ENCODE measurements at regions of chr13 and their contacts with region 1.

Region 1: DNA sequence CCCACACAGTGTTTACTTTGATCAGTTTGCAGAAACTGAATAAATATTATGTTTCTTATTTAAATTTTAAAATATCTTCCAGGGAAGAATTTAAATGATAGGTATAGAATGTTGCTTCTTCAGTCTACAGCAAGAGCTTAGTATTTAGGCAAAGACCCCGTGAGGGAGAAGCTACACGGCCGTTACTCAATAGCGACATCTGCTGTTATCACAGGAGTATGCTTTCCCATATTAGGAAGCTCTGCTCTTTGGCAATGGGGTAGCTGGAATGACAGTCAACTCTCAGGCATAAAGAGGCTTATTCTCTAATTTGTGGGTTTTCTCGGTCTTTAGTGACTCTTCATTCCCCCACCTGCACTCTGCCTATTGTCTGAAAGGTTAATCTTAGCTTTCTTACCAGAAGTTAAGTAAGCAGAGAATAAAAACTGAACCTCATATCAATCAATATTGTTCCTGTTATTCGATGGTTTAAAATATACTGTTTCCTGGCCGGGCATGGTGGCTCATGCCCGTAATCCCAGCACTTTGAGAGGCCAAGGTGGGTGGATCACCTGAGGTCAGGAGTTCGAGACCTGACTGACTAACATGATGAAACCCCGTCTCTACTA is 13.2 kb upstream of the LHFPL6 start:
- DNase-seq: peak; percentile 64
- H3K4me3 ChIP-seq: no peak overlapping the region; a peak in 1 of 4 replicates
- H3K27ac ChIP-seq: no peak overlapping the region
- H3K4me1 ChIP-seq: peaks cover 0 to 6% of the 10 kb centered on the region in 2 experiments; a peak in 1 of 4 replicates
- H3K27me3 ChIP-seq: no peaks in the 10 kb centered on the region
- CTCF ChIP-seq: peak; percentile 90
- EP300 ChIP-seq: no peak
- RAD21 ChIP-seq: peak; percentile 87

Region 2: GRCh38 chr13:38970380-38971051 is 645.7 kb before region 1 on chr13:
- CTCF ChIA-PET with region 1: interaction called, 15 read pairs
- POLR2A ChIA-PET with region 1: no interaction called
- DNase-seq: peak; percentile 3
- H3K4me3 ChIP-seq: no peak overlapping the region
- H3K27ac ChIP-seq: no peak overlapping the region
- H3K4me1 ChIP-seq: no peaks in the 10 kb centered on the region
- H3K27me3 ChIP-seq: no peaks in the 10 kb centered on the region
- CTCF ChIP-seq: no peak
- EP300 ChIP-seq: no peak
- RAD21 ChIP-seq: peak; percentile 60

Region 3: GRCh38 chr13:39154041-39154440 is 462.1 kb before region 1 on chr13:
- CTCF ChIA-PET with region 1: interaction called, 12 read pairs
- POLR2A ChIA-PET with region 1: no interaction called
- DNase-seq: no peak
- H3K4me3 ChIP-seq: no peak overlapping the region
- H3K27ac ChIP-seq: no peak overlapping the region
- H3K4me1 ChIP-seq: no peaks in the 10 kb centered on the region
- H3K27me3 ChIP-seq: no peaks in the 10 kb centered on the region; the same call in 1 of the 2 replicates
- CTCF ChIP-seq: no peak
- EP300 ChIP-seq: no peak
- RAD21 ChIP-seq: no peak

Region 4: DNA sequence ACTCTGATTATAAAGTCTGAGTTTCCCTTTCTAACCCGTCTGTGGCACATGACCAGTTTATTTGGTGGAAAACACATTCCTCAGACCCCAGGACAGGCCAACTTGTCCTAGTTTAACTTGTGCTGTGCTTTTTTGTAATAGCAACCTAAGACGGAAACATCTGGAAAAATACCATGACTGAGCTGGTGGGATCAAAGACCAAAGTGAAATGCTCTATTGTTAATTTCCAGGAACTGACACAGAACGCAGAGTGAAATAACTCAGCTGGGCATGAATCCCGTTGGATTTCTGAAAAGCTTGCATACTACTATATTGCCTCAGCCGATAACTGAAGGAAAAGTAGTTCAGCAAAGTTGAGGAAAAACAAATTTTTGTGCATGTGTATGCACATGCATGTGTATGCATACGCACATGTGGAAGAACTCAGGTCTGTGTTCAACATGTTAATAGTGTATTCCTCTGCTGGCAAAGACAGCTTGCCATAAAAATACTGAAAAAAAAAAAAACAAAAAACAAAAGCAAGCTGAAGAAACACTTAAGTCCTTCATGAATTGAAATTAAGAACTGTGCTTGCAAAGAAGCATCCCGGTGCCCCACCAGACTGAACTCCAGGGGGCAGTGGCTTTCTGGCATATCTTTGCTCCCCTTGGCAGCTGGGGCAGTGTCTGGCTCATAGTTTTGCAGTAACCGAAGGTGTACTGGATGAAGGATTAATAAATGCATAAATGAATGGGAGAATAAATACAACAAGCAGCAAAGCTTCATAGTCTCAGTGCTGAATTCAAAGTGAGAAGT is 201.0 kb before region 1 on chr13:
- CTCF ChIA-PET with region 1: interaction called, 48 read pairs
- POLR2A ChIA-PET with region 1: no interaction called
- DNase-seq: peak; percentile 30
- H3K4me3 ChIP-seq: no peak overlapping the region
- H3K27ac ChIP-seq: no peak overlapping the region
- H3K4me1 ChIP-seq: peaks cover 0 to 3% of the 10 kb centered on the region in 2 experiments; a peak in 2 of 4 replicates
- H3K27me3 ChIP-seq: no peaks in the 10 kb centered on the region
- CTCF ChIP-seq: peak; percentile 67
- EP300 ChIP-seq: no peak
- RAD21 ChIP-seq: peak; percentile 73

Region 5: GRCh38 chr13:39586151-39586550 is 30.0 kb before region 1 on chr13:
- CTCF ChIA-PET with region 1: interaction called, 12 read pairs
- POLR2A ChIA-PET with region 1: no interaction called
- DNase-seq: no peak
- H3K4me3 ChIP-seq: no peak overlapping the region
- H3K27ac ChIP-seq: no peak overlapping the region
- H3K4me1 ChIP-seq: no peaks in the 10 kb centered on the region
- H3K27me3 ChIP-seq: no peaks in the 10 kb centered on the region
- CTCF ChIP-seq: no peak
- EP300 ChIP-seq: no peak
- RAD21 ChIP-seq: no peak

Region 6: DNA sequence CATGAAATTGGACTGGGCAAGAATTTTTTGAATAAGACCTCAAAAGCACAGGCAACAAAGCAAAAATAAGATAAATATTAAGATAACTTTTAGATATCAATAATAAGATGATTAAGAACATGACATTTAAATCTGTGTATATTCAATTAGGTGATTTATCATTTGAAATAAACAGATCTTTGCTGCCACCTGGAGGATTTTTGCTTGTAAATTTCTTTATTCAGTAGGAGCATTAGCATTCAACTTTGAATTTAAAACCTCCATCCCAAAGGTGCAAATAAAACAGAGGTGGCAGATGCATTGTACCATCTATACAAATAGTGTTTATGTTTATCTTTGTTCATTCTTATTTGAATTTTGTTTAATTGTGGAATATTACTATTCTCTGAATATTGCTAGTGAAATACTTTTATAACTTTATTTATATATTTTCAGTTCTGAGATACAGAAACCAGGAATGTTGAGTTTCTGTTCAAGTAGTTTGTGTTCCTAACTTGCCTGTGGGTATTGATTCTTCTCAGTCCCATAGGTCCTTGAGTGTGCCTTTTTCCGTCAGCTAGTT is 60.2 kb after region 1 on chr13:
- CTCF ChIA-PET with region 1: interaction called, 11 read pairs
- POLR2A ChIA-PET with region 1: no interaction called
- DNase-seq: peak; percentile 19
- H3K4me3 ChIP-seq: no peak overlapping the region
- H3K27ac ChIP-seq: no peak overlapping the region
- H3K4me1 ChIP-seq: no peaks in the 10 kb centered on the region; a peak in 1 of 4 replicates
- H3K27me3 ChIP-seq: no peaks in the 10 kb centered on the region
- CTCF ChIP-seq: peak; percentile 66
- EP300 ChIP-seq: no peak
- RAD21 ChIP-seq: peak; percentile 64

Region 7: DNA sequence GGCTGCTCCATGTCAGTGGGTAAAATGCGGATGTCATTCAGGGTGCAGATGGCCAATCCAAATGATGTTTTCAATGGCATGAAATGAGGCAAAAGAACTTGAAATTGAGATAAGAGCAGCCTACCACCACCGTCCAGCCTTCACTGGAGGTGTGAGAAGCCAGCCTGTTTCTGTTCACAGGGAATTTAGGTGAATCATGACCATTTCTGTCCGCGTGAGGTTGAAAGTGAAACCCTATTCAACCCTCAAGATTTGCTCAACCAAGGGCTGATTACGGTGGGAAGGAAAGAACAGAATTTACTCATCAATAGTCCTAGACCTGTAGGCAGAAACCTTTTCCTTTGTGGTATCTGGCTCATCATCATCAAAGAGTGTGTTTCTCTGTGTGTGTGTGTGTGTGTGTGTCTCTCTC is 410.0 kb after region 1 on chr13:
- CTCF ChIA-PET with region 1: no interaction called
- POLR2A ChIA-PET with region 1: no interaction called
- DNase-seq: no peak
- H3K4me3 ChIP-seq: no peak overlapping the region
- H3K27ac ChIP-seq: no peak overlapping the region
- H3K4me1 ChIP-seq: peaks cover 11 to 16% of the 10 kb centered on the region in 2 experiments; a peak in 2 of 4 replicates
- H3K27me3 ChIP-seq: no peaks in the 10 kb centered on the region
- CTCF ChIP-seq: no peak
- EP300 ChIP-seq: no peak
- RAD21 ChIP-seq: no peak

Region 8: DNA sequence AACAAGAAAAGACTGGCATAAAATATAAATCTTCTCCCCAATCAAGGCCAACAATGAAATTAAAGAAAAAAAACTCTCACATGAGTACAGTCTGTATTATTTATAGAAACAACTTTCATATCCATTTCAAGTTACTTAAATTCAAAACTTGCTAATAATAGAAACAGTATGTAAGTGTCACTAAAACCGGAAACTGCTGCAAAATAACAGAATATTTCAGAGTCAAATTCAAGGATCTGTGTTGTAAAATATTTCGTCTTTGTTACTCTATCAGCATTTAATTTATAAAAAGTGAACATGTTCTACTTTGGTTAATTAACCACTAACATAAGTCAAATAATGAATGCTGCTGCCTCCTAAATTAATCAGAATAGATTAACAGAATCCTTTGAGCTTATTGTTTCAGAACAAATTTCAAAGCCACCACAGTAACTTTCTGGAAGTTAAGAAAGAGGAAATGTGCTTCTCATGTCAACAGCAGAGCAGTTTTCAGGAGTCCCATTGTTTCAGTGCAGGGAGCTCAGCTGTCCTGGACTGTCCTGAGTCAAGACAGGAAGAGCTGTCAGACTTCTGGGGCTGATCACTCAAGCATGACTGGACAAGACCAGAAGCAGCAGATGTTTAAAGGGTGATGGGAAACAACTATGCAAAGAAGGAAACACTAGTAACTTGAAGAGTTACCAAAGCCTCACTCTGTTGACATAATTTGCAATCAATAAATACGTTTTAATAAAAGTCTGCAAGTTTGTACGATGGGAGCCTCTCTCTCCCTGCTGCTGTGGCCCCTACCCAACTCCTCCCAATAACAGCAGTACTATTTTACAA is 973.3 kb after region 1 on chr13:
- CTCF ChIA-PET with region 1: no interaction called
- POLR2A ChIA-PET with region 1: no interaction called
- DNase-seq: no peak
- H3K4me3 ChIP-seq: no peak overlapping the region
- H3K27ac ChIP-seq: peak overlapping the region; percentile 19; a peak in 3 of 4 replicates
- H3K4me1 ChIP-seq: peaks cover 3 to 26% of the 10 kb centered on the region in 2 experiments; a peak in 3 of 4 replicates
- H3K27me3 ChIP-seq: no peaks in the 10 kb centered on the region
- CTCF ChIP-seq: no peak
- EP300 ChIP-seq: no peak
- RAD21 ChIP-seq: no peak

Measured in SK-N-SH (cell line).